Ovary (tissue), 10 donors: ENCODE measurements at regions of chr7 and their contacts with region 1.

Region 1: DNA sequence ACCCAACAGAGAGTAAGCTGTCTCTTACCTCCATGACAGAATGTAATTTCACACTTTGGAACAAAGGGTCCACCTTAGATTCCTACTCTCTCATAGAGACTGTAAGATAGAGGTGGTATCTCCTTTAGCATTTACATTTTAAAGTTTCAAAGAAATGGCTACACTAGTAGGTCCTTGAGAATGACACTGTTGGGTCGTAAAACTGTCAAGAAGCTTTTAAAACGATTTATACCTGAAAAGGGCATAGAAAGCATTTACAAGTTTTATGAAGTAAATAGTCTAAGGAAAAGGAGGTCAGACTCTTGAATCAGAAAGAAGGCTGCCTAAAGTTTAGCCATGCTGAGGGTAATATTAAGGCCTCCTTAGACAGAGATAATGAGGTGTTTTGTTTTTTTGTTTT is 1212.4 kb upstream of the PHF14 start:
- DNase-seq: no peak
- H3K4me3 ChIP-seq: no peak overlapping the region
- H3K27ac ChIP-seq: no peak overlapping the region
- H3K4me1 ChIP-seq: no peaks in the 10 kb centered on the region
- H3K27me3 ChIP-seq: no peaks in the 10 kb centered on the region
- CTCF ChIP-seq: no peak
- EP300 ChIP-seq: no peak
- POLR2A ChIP-seq: no peak

Region 2: DNA sequence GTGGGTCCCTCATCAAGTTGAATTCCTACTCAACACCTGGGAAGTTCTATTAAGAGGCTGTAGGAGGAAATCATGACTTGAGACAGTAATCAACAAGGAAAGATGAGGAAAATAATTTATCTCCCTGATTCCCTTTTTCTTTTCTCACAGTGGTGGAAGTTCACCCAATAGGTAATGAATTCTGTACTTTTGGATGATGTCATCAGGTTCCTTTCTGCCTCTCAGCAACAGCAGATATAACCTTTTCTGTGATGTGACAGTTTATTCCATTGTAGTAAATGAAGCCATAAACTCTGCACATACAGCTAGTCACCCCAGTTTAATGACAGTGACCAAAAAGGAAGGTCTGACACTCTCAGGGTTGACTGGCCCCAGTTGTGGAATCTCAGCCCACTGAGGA is 62.8 kb before region 1 on chr7:
- intact Hi-C with region 1: loop called in 1 of 4 experiments (anchors 2 kb)
- DNase-seq: no peak
- H3K4me3 ChIP-seq: no peak overlapping the region
- H3K27ac ChIP-seq: no peak overlapping the region
- H3K4me1 ChIP-seq: no peaks in the 10 kb centered on the region
- H3K27me3 ChIP-seq: no peaks in the 10 kb centered on the region
- CTCF ChIP-seq: no peak
- EP300 ChIP-seq: no peak
- POLR2A ChIP-seq: no peak